Mammary epithelial cell (primary cell): ENCODE measurements at regions of chr9 and their contacts with region 1.

Region 1: DNA sequence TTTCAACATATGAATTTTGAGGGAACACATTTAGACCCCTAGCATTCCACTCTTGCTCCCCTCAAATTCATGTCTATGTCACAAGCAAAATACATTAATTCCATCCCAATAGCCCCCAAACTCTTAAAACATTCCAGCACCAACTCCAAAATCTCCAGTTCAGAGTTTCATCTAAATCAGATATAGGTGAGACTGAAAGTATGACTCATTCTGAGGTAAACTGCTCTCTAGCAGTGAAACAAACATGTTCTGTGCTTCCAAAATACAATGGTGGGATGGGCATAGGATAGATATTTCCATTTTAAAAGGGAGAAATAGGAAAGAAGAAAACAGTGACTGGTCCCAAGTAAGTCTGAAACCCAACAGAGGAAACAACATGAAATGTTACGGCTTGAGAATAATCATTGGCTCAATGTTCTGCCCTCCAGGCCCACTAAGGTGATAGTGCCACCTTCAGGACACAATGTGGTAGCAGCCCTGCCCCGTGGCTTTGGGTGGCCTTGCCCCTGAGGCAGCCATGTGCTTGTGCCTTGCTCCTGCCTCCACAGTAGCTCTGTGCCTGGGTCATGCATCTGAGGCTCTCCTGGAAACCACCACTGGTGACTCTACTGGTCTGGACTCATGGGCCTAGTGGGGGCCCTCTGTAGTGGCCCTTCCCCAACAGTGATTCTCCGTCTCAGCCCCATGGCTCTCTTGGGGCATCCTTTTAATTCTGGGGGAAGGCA is 36.4 kb upstream of the IPPK start:
- DNase-seq: peak; percentile 82
- H3K4me3 ChIP-seq: no peak overlapping the region
- H3K27ac ChIP-seq: peak overlapping the region; percentile 94
- H3K4me1 ChIP-seq: peaks cover 52% of the 10 kb centered on the region
- H3K27me3 ChIP-seq: no peaks in the 10 kb centered on the region
- CTCF ChIP-seq: peak; percentile 78 to 82

Region 2: DNA sequence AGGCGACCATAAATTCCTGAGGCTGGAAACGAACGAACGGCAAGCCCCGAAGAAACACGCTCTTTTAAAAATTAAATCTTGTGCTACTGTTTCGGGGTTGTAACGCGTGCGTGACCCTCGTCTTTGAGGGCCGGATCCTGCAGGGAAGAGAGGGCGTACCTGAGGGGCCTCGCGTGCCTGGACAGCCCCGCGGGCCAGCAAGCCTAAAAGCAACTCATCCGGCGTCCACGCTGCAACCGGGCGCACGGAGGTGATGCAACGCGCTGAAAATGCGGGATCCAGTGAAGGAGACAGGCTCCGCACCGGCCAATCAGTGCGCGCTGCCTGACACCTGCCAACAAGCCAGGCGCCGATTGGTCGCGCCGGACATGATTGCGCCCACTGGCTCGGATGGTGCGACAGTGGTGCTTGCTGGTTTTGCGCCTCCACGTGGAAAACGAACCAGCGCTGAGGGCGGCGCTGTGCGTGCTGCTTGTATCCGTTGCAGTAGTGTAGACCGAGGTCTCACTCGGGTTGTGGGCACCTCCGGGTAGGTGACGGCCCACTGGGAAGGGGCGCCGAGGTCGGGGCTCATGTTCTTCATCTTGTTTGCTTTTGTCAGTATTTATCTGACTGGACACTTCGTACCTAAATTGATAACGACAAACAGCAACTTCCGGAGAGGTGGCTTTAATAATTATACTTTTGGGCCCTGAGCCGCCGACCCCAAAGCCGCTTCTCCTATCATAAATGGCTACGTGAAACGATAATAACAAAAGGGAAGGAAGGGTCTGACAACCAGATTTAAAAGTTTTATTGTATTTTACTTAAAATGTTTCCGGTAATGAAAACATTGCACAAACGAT is 412.7 kb before region 1 on chr9 and contains the start of gene IARS1:
- CTCF ChIA-PET with region 1: no interaction called
- dilution Hi-C with region 1: no loop called
- in situ Hi-C with region 1: no loop called
- intact Hi-C with region 1: no loop called
- DNase-seq: peak; percentile 98
- H3K4me3 ChIP-seq: peak within 1 kb of the TSS; percentile 75 to 100 (median 99)
- H3K27ac ChIP-seq: peak within 1 kb of the TSS; percentile 95
- H3K4me1 ChIP-seq: peaks cover 35% of the 10 kb centered on the region
- H3K27me3 ChIP-seq: no peaks in the 10 kb centered on the region
- CTCF ChIP-seq: peak; percentile 5 to 38
- total RNA-seq, gene IARS1: 240 to 401 TPM

Region 3: GRCh38 chr9:92325269-92325990 is 380.9 kb before region 1 on chr9 and contains the starts of genes CENPP and NOL8:
- CTCF ChIA-PET with region 1: no interaction called
- dilution Hi-C with region 1: no loop called
- in situ Hi-C with region 1: no loop called
- intact Hi-C with region 1: loop called (anchors 5 kb)
- DNase-seq: peak; percentile 91
- H3K4me3 ChIP-seq: peak within 1 kb of the TSS; percentile 80 to 99 (median 93)
- H3K27ac ChIP-seq: peak within 1 kb of the TSS; percentile 98
- H3K4me1 ChIP-seq: peaks cover 27% of the 10 kb centered on the region
- H3K27me3 ChIP-seq: no peaks in the 10 kb centered on the region
- CTCF ChIP-seq: no peak
- total RNA-seq, gene CENPP: 3.0 to 7.5 TPM
- total RNA-seq, gene NOL8: 21.8 to 42.4 TPM

Region 4: DNA sequence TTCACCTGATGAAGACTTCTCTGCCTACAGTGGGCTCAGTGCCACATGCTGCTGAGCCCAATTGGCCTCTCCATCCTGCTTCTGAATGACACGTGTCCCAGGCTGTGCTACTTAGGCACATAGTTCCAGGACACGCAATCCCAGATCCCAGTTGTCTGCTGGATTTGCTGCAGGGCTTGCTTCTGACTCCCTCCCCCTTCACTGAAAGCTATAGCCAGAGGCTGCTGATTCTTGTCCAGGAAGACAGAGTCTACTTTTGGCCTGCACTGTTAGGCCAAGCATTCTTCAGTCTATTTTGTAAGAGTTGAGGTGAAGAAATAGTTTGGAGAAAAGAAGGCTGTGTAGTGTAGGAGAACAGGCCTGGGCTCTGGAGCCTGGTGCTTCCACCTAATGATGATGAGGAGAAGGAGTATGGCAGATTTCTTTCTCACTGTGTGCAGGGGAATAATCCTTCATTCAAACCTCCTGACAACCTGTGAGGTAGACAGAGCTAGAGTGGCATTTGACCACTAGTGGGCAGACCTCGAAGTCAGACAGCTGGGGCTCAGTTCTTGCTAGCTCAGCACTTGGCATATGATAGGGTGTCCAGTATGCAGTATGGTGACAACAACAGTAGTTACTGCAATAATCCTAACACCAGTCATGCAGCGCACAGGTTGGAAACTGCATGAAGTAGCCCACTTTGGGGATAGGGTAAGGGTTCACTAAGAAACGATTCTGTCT is 204.5 kb before region 1 on chr9:
- CTCF ChIA-PET with region 1: no interaction called
- dilution Hi-C with region 1: no loop called
- in situ Hi-C with region 1: no loop called
- intact Hi-C with region 1: loop called (anchors 5 kb)
- DNase-seq: peak; percentile 38
- H3K4me3 ChIP-seq: no peak overlapping the region
- H3K27ac ChIP-seq: no peak overlapping the region
- H3K4me1 ChIP-seq: peaks cover 29% of the 10 kb centered on the region
- H3K27me3 ChIP-seq: no peaks in the 10 kb centered on the region
- CTCF ChIP-seq: peak; percentile 62 to 73

Region 5: GRCh38 chr9:92654481-92655301 is 51.7 kb before region 1 on chr9:
- CTCF ChIA-PET with region 1: no interaction called
- dilution Hi-C with region 1: no loop called
- in situ Hi-C with region 1: no loop called
- intact Hi-C with region 1: loop called (anchors 2 kb)
- DNase-seq: peak; percentile 73
- H3K4me3 ChIP-seq: no peak overlapping the region
- H3K27ac ChIP-seq: peak overlapping the region; percentile 34
- H3K4me1 ChIP-seq: peaks cover 18% of the 10 kb centered on the region
- H3K27me3 ChIP-seq: no peaks in the 10 kb centered on the region
- CTCF ChIP-seq: no peak

Region 6: GRCh38 chr9:92988215-92988819 is 281.9 kb after region 1 on chr9:
- CTCF ChIA-PET with region 1: no interaction called
- dilution Hi-C with region 1: no loop called
- in situ Hi-C with region 1: no loop called
- intact Hi-C with region 1: no loop called
- DNase-seq: peak; percentile 79
- H3K4me3 ChIP-seq: no peak overlapping the region
- H3K27ac ChIP-seq: peak overlapping the region; percentile 86
- H3K4me1 ChIP-seq: peaks cover 16% of the 10 kb centered on the region
- H3K27me3 ChIP-seq: no peaks in the 10 kb centered on the region
- CTCF ChIP-seq: no peak